ENCODE measurements at regions of chr20 and their contacts with region 1.

Region 1: GRCh38 chr20:10673988-10674711 is at the start of gene JAG1:
- DNase-seq: peak; percentile 95
- H3K4me3 ChIP-seq: peak within 1 kb of the TSS; percentile 85 to 97 (median 87)
- H3K27ac ChIP-seq: peak within 1 kb of the TSS; percentile 93
- H3K4me1 ChIP-seq: peaks cover 27% of the 10 kb centered on the region
- H3K27me3 ChIP-seq: no peaks in the 10 kb centered on the region
- CTCF ChIP-seq: no peak
- total RNA-seq, gene JAG1: 244 to 283 TPM

Region 2: GRCh38 chr20:10611357-10611756 is 62.8 kb before region 1 on chr20:
- CTCF ChIA-PET with region 1: no interaction called
- dilution Hi-C with region 1: no loop called
- in situ Hi-C with region 1: no loop called
- intact Hi-C with region 1: loop called (anchors 2 kb)
- DNase-seq: peak; percentile 57
- H3K4me3 ChIP-seq: no peak overlapping the region
- H3K27ac ChIP-seq: no peak overlapping the region
- H3K4me1 ChIP-seq: no peaks in the 10 kb centered on the region
- H3K27me3 ChIP-seq: no peaks in the 10 kb centered on the region
- CTCF ChIP-seq: peak; percentile 53 to 64

Region 3: DNA sequence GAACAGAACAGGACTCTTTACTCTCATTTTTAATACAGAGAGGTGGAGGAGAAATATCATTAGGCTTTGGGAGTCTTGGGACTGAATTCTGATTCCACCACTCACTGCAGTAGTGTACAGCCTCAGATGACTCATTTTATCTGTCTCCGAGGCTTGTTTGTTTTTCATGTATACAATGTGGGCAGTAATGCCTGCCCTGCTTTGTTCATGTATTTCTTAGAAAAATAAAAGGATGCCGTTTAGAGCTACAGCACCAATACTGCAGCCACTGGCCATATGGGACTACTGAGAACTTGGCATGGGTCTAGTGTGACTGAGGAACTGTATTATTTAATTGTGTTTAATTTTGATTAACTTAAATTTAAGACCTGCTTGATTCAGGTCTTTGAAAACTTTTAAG is 40.9 kb after region 1 on chr20:
- CTCF ChIA-PET with region 1: no interaction called
- dilution Hi-C with region 1: no loop called
- in situ Hi-C with region 1: no loop called
- intact Hi-C with region 1: no loop called
- DNase-seq: peak; percentile 64
- H3K4me3 ChIP-seq: no peak overlapping the region
- H3K27ac ChIP-seq: no peak overlapping the region
- H3K4me1 ChIP-seq: peaks cover 12% of the 10 kb centered on the region
- H3K27me3 ChIP-seq: no peaks in the 10 kb centered on the region
- CTCF ChIP-seq: no peak

Region 4: GRCh38 chr20:10761232-10761631 is 87.1 kb after region 1 on chr20:
- CTCF ChIA-PET with region 1: no interaction called
- dilution Hi-C with region 1: no loop called
- in situ Hi-C with region 1: no loop called
- intact Hi-C with region 1: no loop called
- DNase-seq: peak; percentile 95
- H3K4me3 ChIP-seq: no peak overlapping the region
- H3K27ac ChIP-seq: peak overlapping the region; percentile 17
- H3K4me1 ChIP-seq: peaks cover 18% of the 10 kb centered on the region
- H3K27me3 ChIP-seq: no peaks in the 10 kb centered on the region
- CTCF ChIP-seq: no peak

Region 5: DNA sequence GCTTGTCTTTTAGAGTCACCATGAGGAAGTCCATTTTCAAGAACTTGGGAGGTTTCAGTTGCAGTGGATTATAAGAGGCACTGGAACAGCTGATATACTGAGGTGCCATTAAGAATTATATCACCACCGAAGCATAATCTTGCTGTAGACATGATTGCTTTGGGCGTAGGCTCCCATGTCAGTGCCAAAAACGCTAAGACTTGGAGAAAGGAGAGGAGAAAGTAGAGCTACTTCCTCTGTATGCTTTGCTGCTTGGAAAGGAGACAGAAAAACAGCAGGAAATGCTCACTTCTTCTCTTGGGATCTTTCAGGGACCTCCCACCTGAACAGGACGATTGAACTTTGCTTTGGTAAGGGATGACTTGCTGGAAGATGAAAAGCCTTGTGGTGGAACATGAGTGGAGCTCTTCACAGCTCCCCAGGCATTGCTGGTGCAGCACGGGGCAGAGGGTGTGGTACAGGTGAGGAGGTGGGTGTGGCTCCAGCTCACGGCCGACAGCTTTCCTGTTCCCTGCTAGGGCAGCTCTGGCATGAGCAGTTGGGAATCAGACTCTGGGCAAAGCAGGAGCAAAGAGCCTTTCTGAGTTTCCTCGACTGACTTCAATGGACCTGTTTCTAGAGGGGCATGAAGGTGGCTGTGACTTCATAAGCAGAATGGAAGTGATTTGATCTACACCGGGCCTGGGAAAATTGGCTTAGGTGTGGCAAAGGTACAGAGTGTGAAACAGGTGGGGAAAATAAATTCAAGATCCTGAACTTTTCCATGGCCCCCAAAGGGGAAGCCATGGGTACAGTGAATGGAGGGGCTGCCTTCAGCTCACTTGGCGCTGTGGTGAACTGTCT is 190.1 kb after region 1 on chr20:
- CTCF ChIA-PET with region 1: no interaction called
- dilution Hi-C with region 1: no loop called
- in situ Hi-C with region 1: no loop called
- intact Hi-C with region 1: loop called (anchors 1 kb)
- DNase-seq: peak; percentile 18
- H3K4me3 ChIP-seq: no peak overlapping the region
- H3K27ac ChIP-seq: no peak overlapping the region
- H3K4me1 ChIP-seq: peaks cover 17% of the 10 kb centered on the region
- H3K27me3 ChIP-seq: no peaks in the 10 kb centered on the region
- CTCF ChIP-seq: no peak

Region 6: DNA sequence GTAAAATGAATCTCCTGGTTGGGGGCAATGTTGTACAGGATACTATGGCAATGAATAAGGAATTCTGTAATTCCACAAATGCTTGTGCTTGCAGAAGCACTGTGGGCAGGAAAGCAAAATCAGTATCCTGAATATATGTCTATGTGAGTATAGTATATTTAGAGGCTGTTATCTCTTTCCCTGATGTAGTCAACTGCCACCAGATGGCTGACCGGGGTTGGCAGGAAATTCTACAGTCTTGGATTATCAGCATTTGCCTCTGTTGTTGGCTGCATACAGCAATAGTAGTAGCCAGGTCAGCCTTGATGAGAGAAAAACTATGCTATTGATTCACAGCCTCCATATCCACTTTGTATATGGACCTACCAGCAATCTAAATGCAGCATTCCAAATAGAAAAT is 424.7 kb after region 1 on chr20:
- CTCF ChIA-PET with region 1: no interaction called
- dilution Hi-C with region 1: no loop called
- in situ Hi-C with region 1: no loop called
- intact Hi-C with region 1: loop called (anchors 1 kb)
- DNase-seq: peak; percentile 28
- H3K4me3 ChIP-seq: no peak overlapping the region
- H3K27ac ChIP-seq: no peak overlapping the region
- H3K4me1 ChIP-seq: peaks cover 4% of the 10 kb centered on the region
- H3K27me3 ChIP-seq: no peaks in the 10 kb centered on the region
- CTCF ChIP-seq: peak in 1 of 2 donors; percentile 55

Region 7: DNA sequence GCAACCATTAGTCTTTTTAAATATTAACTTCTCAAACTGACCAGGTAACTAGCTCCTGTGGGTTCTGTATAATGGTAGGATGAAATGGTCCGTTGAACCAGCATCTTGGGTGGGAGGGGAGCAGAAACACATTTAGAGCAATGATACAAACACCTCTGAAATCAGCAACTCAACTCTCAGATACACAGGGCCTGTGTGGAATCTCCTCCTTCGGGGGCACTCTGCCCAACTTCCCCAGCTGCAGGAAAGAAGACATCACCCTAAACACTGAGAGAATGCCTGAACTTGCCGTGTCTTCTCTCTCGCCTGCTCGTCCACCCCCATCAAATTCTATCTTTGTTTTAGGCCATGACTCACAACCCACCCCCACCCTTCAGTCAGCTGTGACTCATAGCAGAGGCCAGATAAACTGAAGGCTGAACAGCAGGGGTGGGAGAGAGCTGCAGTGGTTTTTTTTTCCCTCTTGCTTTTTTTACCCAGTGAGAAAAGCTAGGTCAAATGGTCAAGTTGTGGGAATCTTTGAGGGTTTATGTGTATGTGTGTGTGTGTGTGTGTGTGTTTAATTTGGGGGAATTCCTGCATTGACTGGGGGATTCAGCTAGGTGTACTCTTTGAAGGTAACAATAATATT is 593.1 kb after region 1 on chr20:
- CTCF ChIA-PET with region 1: interaction called, 4 read pairs
- dilution Hi-C with region 1: no loop called
- in situ Hi-C with region 1: loop called in 1 of 2 experiments (anchors 5 kb)
- intact Hi-C with region 1: loop called (anchors 1 kb)
- DNase-seq: peak; percentile 99
- H3K4me3 ChIP-seq: no peak overlapping the region
- H3K27ac ChIP-seq: peak overlapping the region; percentile 59
- H3K4me1 ChIP-seq: peaks cover 23% of the 10 kb centered on the region
- H3K27me3 ChIP-seq: no peaks in the 10 kb centered on the region
- CTCF ChIP-seq: peak in 1 of 2 donors; percentile 17

Region 8: GRCh38 chr20:11387189-11387754 is 713.1 kb after region 1 on chr20:
- CTCF ChIA-PET with region 1: no interaction called
- dilution Hi-C with region 1: no loop called
- in situ Hi-C with region 1: no loop called
- intact Hi-C with region 1: no loop called
- DNase-seq: peak; percentile 97
- H3K4me3 ChIP-seq: no peak overlapping the region
- H3K27ac ChIP-seq: peak overlapping the region; percentile 81
- H3K4me1 ChIP-seq: peaks cover 25% of the 10 kb centered on the region
- H3K27me3 ChIP-seq: no peaks in the 10 kb centered on the region
- CTCF ChIP-seq: no peak

Region 9: GRCh38 chr20:11544029-11544678 is 870.0 kb after region 1 on chr20:
- CTCF ChIA-PET with region 1: no interaction called
- dilution Hi-C with region 1: no loop called
- in situ Hi-C with region 1: loop called (anchors 10 to 25 kb)
- intact Hi-C with region 1: loop called (anchors 1 kb)
- DNase-seq: peak; percentile 79
- H3K4me3 ChIP-seq: peak overlapping the region in 2 of 3 experiments; percentile 16 to 31
- H3K27ac ChIP-seq: peak overlapping the region; percentile 88
- H3K4me1 ChIP-seq: peaks cover 17% of the 10 kb centered on the region
- H3K27me3 ChIP-seq: no peaks in the 10 kb centered on the region
- CTCF ChIP-seq: peak; percentile 38 to 60

Measured in mammary epithelial cell (primary cell).